ENCODE measurements at regions of chr2 and their contacts with region 1.

Region 1: GRCh38 chr2:69914170-69914960 is 544 bp upstream of the MXD1 start:
- DNase-seq: peak; percentile 100
- H3K4me3 ChIP-seq: peak overlapping the region; percentile 74
- CTCF ChIP-seq: peak; percentile 46

Region 2: GRCh38 chr2:69902213-69902922 is 12.0 kb before region 1 on chr2:
- CTCF ChIA-PET with region 1: interaction called, 26 read pairs
- POLR2A ChIA-PET with region 1: no interaction called
- DNase-seq: no peak
- H3K4me3 ChIP-seq: no peak overlapping the region
- CTCF ChIP-seq: no peak

Region 3: GRCh38 chr2:70070541-70071268 is 156.3 kb after region 1 on chr2:
- CTCF ChIA-PET with region 1: interaction called, 146 read pairs
- POLR2A ChIA-PET with region 1: interaction called, 16 read pairs
- DNase-seq: peak; percentile 70
- H3K4me3 ChIP-seq: no peak overlapping the region
- CTCF ChIP-seq: peak; percentile 79

Region 4: DNA sequence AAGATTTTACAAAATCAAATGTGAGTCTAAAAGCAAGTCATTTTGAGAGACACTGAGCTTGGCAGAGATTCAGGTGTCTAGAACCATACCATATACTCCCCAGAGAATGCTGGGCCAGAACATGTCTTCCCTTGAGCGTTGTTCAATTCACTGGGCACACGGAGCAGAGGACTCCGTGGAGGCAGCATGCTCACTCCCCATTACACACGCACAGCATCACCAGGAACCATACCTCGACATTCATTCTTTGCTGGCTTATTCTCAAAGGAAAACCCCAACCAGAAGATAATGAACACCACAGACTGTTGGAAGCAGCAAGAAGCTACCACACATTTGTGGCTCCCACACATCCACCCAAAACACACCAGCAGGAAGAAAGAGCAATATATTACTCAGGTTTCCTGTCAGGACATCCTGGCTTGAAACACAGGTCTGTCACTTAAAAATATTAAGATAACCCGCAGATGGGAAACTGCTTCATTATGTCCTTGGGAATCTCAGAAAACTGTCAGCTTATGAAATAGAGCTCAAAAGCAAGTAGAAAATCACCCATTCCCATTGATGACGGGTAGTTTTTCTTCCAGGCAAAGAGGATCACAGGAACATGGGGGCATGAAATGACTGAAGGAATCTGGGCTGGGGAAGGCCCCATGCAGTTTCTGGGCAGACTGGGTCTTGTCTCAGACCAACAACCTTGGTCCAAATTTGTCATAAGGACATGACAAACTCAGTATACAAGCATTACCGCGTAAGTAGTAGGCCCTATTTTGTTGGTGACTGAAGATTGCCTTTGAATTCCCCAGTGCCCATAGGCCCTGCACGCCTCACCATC is 219.3 kb after region 1 on chr2:
- CTCF ChIA-PET with region 1: interaction called, 16 read pairs
- POLR2A ChIA-PET with region 1: interaction called, 6 read pairs
- DNase-seq: no peak
- H3K4me3 ChIP-seq: no peak overlapping the region
- CTCF ChIP-seq: no peak

Region 5: DNA sequence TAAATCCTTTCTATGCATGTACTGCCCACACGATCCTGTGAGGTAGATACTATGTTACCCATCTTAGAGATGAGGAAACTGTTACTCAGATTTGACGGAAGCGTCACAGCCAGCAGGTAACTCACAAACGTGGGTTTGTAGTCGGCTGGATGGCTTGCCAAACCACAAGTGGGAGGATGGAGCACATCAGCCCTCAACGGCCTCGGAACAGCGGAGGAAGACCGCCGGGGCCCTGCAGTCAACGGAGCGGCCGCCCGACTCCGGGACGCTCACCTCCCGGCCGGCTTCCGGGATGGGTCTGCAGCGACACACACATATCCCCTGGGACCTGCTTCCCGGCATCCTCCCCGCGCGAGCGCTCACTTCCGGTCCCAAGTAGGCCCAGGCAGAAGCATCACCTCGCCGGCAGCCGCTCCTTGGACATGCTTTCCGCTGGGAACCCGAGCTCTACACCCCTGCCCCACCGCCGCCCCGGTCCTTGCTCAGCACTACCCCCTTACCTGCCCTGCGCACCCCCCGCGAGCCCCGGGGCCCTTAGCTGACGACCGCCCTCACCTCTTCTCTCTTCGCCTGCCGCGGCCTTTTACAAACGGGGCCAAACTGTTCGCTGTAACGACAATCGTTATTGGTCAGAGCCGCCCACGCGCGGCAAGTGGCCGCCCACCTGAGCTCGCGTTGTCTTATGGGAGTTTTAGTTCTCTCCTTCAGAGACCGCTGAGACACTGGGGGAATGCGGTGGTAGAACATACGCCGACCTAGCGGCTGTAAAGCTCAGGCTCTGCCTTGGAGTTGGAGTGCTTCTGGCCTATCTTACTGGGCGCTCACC is 276.3 kb after region 1 on chr2 and contains the start of gene C2orf42:
- CTCF ChIA-PET with region 1: interaction called, 6 read pairs
- POLR2A ChIA-PET with region 1: interaction called, 18 read pairs
- DNase-seq: peak; percentile 89
- H3K4me3 ChIP-seq: peak within 1 kb of the TSS; percentile 69
- CTCF ChIP-seq: peak; percentile 22